ENCODE measurements at regions of chr6 and their contacts with region 1.

Region 1: DNA sequence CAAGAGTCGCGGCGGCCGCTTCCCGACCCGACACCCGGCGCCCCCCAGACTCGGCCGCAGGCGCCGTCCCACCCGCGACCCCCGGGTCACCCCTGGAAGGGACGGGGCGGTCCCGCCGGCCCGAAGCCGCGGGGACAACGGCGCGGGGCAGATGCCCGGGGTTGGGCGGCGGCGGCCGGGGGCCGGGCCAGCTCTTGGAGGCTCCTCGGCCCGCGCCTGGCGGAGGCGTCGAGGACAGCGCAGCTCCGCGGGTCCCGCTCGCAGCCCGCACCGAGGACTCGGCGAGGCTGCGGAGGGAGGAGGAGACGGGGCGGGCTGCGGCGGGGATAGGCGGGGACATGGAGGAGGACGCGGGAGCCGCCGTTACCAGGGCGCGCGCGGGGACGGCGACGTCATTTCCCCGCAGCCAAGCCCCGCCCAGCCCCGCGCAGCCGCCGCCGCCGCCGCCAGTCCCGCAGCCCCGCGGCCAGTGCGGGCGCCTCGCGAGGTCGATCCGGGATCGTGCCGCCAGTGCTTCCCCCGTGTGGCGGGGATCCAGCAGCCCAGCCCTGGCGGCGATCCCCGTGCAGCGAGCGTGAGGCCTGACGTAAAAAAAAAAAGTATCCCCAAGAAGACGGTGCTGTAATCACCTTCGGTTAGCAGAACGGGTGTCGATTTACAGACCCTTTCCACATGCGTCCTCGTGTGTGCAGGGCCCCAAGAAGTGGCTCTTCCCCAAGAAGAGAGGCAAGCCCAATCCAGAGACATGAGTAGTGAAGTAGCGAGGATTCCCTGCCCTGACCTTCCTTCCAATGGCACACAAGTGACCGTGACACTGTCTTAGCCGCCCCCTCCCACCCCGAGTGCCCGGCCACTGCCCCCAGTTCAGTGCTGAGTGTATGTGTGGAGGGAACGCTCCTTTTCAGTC is at the start of gene FAM184A:
- DNase-seq: peak; percentile 73
- H3K4me3 Mint-ChIP-seq: peak within 1 kb of the TSS; percentile 92
- H3K27ac Mint-ChIP-seq: peak within 1 kb of the TSS; percentile 91
- H3K4me1 Mint-ChIP-seq: peaks cover 43% of the 10 kb centered on the region
- H3K27me3 Mint-ChIP-seq: peaks cover 8% of the 10 kb centered on the region
- total RNA-seq, gene FAM184A: 9.0 and 9.4 TPM in 2 replicates

Region 2: DNA sequence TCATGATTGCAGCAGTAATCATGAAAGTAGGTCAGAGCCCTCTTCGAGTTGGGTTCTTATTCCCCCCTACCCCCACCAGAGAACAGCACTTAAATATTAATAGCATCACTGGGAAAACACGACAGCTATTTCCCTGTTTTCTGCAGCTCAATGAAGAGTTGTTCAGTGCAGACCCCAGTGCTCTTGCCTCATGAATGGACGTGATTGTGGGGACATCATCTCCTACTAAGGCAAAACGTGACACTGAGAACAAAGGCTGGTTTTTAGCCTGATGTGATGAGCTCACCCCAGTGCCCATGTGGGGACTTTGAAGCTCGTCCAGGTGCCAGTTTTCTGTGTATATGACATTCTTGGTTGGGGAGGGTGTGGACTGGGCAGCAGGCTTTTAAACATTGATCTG is 1065.7 kb before region 1 on chr6:
- intact Hi-C with region 1: no loop called
- DNase-seq: no peak
- H3K4me3 Mint-ChIP-seq: no peak overlapping the region
- H3K27ac Mint-ChIP-seq: no peak overlapping the region
- H3K4me1 Mint-ChIP-seq: no peaks in the 10 kb centered on the region
- H3K27me3 Mint-ChIP-seq: no peaks in the 10 kb centered on the region

Region 3: DNA sequence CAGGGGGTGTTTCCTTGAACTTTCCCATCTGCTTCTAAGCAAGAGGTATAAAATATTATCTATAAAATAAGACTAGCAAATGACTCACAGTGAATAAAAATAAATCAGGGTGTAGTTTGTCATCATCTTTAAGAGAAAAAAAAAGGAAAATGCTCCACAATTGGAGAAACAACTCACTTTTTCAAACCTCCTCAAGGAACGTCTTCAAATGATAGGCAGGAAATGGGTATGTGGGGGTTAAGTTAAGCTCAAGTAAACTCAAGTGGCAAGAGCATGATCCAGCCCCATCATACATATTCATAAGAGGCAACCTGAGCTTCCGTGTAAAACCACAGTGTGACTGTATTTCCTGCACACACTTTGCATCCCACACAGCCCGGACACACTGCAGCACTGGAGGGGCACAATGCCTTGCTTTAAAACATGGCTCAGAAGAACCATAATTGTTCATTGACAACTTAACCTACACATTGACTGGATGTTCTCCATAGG is 368.7 kb before region 1 on chr6:
- intact Hi-C with region 1: loop called (anchors 5 kb)
- DNase-seq: peak; percentile 77
- H3K4me3 Mint-ChIP-seq: peak overlapping the region; percentile 96
- H3K27ac Mint-ChIP-seq: peak overlapping the region; percentile 99
- H3K4me1 Mint-ChIP-seq: peaks cover 94% of the 10 kb centered on the region
- H3K27me3 Mint-ChIP-seq: peaks cover under 1% of the 10 kb centered on the region

Region 4: DNA sequence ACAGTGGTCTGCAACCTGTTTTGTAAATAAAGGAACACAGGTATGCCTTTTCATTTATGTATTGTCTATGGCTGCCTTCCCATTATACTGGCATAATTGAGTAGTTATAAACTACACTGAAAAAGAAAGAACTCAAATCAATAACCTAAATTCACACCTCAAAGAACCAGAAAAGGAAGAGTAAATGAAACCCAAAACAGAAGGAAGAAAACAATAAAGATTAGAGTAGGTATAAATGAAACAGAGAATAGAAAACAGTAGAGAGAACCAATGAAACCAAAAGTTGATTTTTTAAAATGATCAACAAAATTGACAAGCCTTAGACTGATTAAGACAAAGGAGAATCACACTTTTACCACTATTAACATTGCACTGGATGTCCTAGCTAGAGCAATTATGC is 34.8 kb before region 1 on chr6:
- intact Hi-C with region 1: loop called (anchors 1 kb)
- DNase-seq: no peak
- H3K4me3 Mint-ChIP-seq: no peak overlapping the region
- H3K27ac Mint-ChIP-seq: peak overlapping the region; percentile 14
- H3K4me1 Mint-ChIP-seq: peaks cover 14% of the 10 kb centered on the region
- H3K27me3 Mint-ChIP-seq: peaks cover 2% of the 10 kb centered on the region

Region 5: DNA sequence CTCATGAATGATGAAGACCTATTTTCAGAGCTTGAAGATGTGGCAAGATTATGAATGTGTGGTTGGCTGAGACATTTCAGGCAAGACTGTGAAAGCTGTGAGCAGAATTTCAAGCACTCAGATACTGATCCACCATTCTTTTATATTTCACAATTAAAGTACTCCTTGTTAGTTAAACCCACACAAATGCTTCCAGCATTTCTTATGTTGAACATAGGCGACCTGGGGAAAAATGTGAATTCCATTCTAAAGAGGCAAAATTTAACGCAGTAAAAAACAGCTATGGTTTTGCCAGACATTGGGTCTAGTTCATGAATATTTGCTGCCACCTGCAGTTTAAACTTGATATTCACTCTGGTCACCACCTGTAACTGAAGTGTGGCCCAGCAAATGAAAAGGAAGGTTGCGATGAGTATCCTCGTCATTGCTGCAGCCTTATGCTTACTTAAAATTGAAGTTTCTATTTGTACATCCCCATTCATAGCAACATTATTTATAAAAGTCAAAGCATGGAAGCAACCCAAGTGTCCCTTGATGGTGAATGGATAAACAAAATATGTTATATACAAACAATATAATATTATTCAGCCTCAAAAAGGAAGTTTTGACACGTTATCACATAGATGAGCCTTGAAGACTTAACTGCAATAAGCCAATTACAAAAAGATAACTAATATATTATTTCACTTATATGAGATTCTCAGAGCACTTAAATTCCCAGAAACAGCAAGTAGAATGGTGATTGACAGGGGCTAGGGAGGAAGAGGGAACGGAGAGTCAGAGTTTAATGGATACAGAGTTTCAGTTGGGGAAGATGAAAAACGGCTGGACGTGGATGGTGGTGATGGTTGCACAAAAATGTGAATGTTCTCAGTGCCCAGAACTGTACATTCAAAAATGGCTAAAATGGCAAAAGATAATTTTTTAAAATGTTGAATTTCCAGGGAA is 32.2 kb after region 1 on chr6:
- intact Hi-C with region 1: loop called (anchors 1 kb)
- DNase-seq: peak; percentile 31
- H3K4me3 Mint-ChIP-seq: no peak overlapping the region
- H3K27ac Mint-ChIP-seq: no peak overlapping the region
- H3K4me1 Mint-ChIP-seq: peaks cover 17% of the 10 kb centered on the region
- H3K27me3 Mint-ChIP-seq: peaks cover 3% of the 10 kb centered on the region

Region 6: DNA sequence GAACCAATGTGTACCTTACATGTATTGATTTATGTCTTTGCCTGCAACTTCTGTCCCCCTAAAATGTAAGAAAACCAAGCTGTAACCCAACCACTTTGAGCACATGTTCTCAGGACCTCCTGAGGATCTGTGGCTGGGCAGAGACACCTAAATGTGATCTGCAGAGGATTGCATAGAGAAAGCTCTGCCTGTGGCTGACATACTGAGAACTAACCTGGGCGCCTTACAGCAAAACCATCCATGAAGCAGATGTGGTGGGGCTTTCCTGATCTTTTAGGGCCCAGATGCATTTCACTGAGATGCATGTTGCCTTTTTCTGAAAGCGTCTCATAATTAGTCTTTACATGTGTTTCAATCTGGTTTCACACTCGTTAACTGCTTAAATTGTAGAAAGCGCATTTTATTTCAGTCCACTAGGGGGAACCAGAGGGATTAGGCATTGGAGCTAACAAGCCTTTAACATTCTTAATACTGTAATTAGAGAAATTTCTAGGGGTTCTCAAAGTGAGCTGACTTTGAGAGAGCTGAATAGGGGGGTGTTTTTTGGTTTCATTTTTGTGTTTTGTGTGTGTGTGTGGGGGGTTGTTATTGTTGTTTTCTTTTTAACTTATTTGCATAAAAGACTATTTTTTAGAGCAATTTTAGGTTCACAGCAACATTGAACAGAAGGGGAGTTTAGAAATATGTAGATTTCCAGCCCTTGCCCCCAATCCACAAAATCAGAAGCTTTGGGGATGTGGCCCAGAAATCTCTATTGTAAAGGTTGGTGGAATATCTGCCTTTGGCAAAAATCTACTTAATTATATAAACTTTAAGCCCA is 50.7 kb after region 1 on chr6:
- intact Hi-C with region 1: no loop called
- DNase-seq: no peak
- H3K4me3 Mint-ChIP-seq: no peak overlapping the region
- H3K27ac Mint-ChIP-seq: peak overlapping the region; percentile 82
- H3K4me1 Mint-ChIP-seq: peaks cover 12% of the 10 kb centered on the region
- H3K27me3 Mint-ChIP-seq: peaks cover 9% of the 10 kb centered on the region

Region 7: GRCh38 chr6:119313937-119314884 is 235.6 kb after region 1 on chr6:
- intact Hi-C with region 1: loop called (anchors 2 kb)
- DNase-seq: peak; percentile 45
- H3K4me3 Mint-ChIP-seq: peak overlapping the region; percentile 73
- H3K27ac Mint-ChIP-seq: peak overlapping the region; percentile 99
- H3K4me1 Mint-ChIP-seq: peaks cover 76% of the 10 kb centered on the region
- H3K27me3 Mint-ChIP-seq: no peaks in the 10 kb centered on the region

Measured in activated T-helper 1 cell treated with anti-CD3 and anti-CD28 coated beads, Interleukin-12 subunit alpha, Interleukin-12 subunit beta, Interleukin-2, Interleukin-4 antibody, amounts not matched to agents 30 ng/mL and 10 ng/mL and 1 ng/mL, durations not matched to agents 14 hours and 24 hours and 36 hours (primary cell).